Activated T-helper 1 cell treated with anti-CD3 and anti-CD28 coated beads, Interleukin-12 subunit alpha, Interleukin-12 subunit beta, Interleukin-2, Interleukin-4 antibody, amounts not matched to agents 30 ng/mL and 10 ng/mL and 1 ng/mL, durations not matched to agents 14 hours and 24 hours and 36 hours (primary cell): ENCODE measurements at regions of chr5 and their contacts with region 1.

Region 1: DNA sequence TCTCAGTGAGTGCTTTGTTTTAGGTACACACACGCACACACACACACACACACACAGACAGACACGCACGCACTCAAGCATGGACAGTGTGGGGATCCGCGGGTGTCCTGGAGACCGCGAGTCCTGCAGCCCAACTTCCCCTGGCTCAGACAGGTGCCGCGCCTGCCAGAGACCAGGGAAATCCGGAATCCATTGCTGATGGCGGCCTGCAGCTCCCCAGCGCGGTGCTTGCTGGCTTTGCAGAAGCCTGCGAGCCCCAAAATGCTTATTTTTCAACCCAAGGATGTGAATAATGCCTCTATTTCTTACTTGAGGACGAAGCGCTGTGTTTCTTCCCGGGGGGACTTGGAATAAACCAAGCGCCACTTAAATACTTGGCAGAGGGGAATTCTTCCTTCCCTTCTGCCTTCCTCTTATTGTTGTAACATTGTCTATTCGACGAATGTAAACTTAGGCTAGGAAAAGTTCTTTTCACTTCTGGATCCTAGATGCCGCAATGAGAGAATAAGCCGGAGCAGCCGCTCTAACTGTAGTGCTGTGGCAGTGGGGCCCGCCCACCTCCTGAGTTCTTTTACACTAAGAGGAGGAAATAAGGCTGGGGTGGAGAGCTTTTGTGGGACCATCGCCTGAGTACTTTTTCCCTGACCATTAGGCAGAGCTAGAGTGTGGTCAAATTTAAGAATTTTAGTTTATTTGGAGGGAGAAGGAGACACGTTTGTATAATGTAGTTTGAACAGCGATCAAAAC is 802 bp downstream of the ITGA2 start:
- DNase-seq: peak; percentile 21
- H3K4me3 Mint-ChIP-seq: peak overlapping the region; percentile 83
- H3K27ac Mint-ChIP-seq: peak overlapping the region; percentile 45
- H3K4me1 Mint-ChIP-seq: peaks cover 34% of the 10 kb centered on the region
- H3K27me3 Mint-ChIP-seq: peaks cover 2% of the 10 kb centered on the region

Region 2: GRCh38 chr5:52657247-52657645 is 332.7 kb before region 1 on chr5:
- intact Hi-C with region 1: no loop called
- DNase-seq: no peak
- H3K4me3 Mint-ChIP-seq: no peak overlapping the region
- H3K27ac Mint-ChIP-seq: no peak overlapping the region
- H3K4me1 Mint-ChIP-seq: peaks cover 5% of the 10 kb centered on the region
- H3K27me3 Mint-ChIP-seq: peaks cover 35% of the 10 kb centered on the region

Region 3: GRCh38 chr5:53089345-53089991 is 99.5 kb after region 1 on chr5:
- intact Hi-C with region 1: loop called (anchors 1 kb)
- DNase-seq: no peak
- H3K4me3 Mint-ChIP-seq: peak overlapping the region; percentile 53
- H3K27ac Mint-ChIP-seq: peak overlapping the region; percentile 75
- H3K4me1 Mint-ChIP-seq: peaks cover 54% of the 10 kb centered on the region
- H3K27me3 Mint-ChIP-seq: peaks cover 6% of the 10 kb centered on the region

Region 4: DNA sequence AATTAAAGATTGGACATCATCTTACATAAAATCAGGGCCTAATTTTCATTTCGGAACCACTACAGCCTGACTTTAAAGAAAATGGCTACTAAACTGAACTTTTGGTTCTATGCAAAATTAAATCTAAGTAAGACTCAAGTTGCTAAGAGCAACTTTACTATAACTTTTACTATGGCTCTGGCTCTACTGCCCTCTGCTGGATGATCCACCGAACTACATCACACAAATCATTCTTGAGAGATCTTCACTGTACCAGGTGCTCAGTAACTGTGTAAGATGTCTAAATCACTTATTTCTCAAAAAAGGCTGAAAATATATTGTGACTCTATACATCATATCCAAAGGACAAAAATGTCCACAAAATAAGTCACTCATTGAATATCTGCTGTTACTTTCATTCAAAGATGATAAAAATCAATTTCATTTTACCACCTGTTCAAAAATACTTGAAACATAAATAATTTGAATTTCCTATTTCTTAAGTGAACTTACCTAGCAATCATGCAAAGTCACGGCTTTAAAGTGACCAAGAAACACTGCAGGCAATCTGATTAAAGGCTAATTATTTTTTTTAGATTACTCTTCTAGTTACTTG is 106.1 kb after region 1 on chr5:
- intact Hi-C with region 1: loop called (anchors 1 kb)
- DNase-seq: peak; percentile 56
- H3K4me3 Mint-ChIP-seq: no peak overlapping the region
- H3K27ac Mint-ChIP-seq: no peak overlapping the region
- H3K4me1 Mint-ChIP-seq: peaks cover 17% of the 10 kb centered on the region
- H3K27me3 Mint-ChIP-seq: no peaks in the 10 kb centered on the region